Dendritic cell treated with granulocyte-macrophage colony-stimulating factor and Interleukin-4, amounts not matched to agents 40 ng/mL and 50 ng/mL, for 4 days (primary cell): ENCODE measurements at regions of chr16 and their contacts with region 1.

Region 1: DNA sequence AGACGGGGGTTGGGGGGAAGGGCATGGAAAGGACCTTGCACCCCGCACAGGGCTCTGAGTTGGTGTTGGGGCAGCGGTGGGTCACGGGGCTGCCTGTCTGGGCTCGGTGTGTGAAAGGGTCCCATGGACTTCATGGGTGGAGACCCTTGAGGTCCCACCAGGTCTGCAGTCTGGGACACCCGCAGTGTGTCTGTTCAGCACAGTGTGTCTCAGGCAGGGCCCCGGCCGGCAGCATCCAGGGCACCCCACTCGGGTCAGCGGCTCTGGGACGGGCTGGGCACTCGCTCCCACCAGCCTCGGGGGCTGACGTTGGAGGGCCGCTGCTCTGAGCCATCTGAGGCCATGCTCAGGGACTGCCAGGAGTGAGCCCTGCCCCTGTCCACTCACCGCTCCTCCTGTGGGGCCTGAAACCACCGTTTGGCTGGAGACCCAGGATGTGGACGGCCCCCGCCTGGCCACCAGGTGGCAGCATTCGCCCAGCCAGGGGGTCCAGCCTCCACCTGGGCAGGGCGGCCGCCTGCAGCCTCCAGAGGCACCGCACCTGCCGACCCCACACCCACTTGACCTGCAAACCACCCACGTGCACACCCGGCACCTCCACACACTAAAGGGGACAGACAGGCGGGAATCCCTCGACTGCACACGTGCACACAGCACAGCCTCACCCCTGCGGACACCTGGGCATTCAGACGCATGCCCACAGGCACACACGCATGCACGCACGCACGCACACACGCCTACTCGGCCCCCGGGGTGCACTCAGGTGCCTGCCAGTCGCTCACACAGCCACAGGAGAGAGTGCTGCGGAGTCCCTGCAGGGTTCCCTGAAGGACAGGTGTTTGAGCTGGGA is 10.1 kb upstream of the ZFPM1 start:
- H3K4me3 Mint-ChIP-seq: no peak overlapping the region
- H3K27ac Mint-ChIP-seq: no peak overlapping the region
- H3K4me1 Mint-ChIP-seq: peaks cover 3% of the 10 kb centered on the region
- H3K27me3 Mint-ChIP-seq: peaks cover 39% of the 10 kb centered on the region

Region 2: DNA sequence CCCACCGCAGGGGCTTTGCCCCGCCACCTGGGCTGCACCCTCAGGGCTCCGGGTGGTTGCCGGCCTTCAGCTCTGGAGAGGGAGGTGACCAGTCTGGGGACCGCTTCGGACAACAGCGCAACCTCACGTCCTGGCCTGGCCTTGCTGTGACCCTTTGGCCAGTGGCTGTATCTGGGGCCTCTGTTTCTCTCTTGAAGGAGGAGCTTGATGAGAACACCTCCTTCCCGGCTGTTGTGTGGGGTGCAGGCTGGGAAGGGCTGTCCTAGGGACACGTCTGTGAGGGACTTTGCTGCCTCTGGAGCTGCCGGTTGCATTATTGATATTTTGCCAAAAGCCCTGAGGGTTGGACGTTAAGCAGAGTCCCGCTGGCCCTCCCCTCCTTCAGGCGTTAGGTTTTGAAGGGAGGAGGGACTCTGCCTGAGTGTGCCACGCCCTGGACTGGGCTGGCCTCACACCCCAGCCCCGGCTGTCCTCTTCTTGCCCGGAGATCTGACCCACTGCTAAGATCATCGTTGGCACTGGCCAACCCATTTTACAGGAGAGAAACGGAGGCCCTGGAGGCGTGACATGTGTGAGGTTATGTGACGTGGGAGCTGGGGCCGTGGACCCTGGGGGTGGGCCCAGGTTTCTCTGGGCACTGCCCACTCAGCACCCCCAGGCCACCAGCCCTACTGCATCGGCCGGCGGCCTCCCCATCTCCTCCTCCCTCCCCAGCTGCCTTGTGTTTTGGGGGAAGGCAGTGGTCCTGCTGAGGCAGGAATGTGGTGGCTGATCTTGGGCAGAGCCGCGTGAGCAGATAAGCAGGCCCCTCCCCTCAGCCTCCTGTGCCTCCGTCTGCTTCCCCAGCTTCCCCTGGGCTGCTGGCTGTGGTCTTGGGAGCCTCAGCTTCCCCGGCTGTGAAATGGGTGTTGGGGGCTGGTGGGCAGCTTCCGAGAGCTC is 18.6 kb after region 1 on chr16:
- intact Hi-C with region 1: no loop called
- H3K4me3 Mint-ChIP-seq: no peak overlapping the region
- H3K27ac Mint-ChIP-seq: peak overlapping the region; percentile 16
- H3K4me1 Mint-ChIP-seq: peaks cover 17% of the 10 kb centered on the region
- H3K27me3 Mint-ChIP-seq: peaks cover 66% of the 10 kb centered on the region

Region 3: DNA sequence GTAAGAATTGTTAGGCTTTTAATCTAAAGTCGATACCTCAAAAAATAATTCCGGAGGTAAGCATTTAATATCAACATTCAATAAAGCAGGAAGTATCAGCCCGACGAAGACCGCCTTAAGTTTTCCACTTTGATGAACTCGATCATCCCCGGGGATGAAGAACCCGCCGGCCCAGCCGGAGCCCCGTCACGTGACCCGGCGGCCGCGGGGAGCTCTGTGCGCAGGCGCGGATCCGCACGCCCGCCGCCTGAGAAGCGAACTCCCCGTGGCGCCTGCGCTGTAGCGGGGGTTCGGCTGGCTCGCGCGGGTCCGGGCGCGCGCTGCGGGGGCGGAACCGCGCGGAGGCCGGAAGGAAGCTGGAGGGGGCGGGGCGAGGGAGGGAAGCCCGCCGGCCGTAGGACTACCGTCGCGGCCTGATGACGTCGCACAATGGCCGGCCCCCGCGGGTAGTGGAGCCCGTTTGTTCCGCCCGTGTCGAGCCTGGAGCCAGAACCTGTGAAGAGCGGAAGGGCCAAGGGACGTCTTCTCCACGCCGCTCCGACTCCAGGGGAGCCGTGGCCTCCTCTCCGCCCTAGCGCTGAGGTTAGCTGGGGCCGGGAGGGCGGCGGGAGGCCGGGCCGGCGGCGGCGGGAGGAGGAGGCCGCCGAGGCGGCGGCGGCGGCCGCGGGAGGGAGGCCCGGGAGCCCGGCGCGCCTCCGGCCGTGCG is 127.2 kb after region 1 on chr16 and contains the start of gene ZC3H18:
- intact Hi-C with region 1: loop called (anchors 10 kb)
- H3K4me3 Mint-ChIP-seq: peak within 1 kb of the TSS; percentile 80
- H3K27ac Mint-ChIP-seq: peak within 1 kb of the TSS; percentile 84
- H3K4me1 Mint-ChIP-seq: peaks cover 35% of the 10 kb centered on the region
- H3K27me3 Mint-ChIP-seq: peaks cover 1% of the 10 kb centered on the region